CD4-positive, alpha-beta T cell (primary cell): ENCODE measurements at regions of chr18 and their contacts with region 1.

Region 1: DNA sequence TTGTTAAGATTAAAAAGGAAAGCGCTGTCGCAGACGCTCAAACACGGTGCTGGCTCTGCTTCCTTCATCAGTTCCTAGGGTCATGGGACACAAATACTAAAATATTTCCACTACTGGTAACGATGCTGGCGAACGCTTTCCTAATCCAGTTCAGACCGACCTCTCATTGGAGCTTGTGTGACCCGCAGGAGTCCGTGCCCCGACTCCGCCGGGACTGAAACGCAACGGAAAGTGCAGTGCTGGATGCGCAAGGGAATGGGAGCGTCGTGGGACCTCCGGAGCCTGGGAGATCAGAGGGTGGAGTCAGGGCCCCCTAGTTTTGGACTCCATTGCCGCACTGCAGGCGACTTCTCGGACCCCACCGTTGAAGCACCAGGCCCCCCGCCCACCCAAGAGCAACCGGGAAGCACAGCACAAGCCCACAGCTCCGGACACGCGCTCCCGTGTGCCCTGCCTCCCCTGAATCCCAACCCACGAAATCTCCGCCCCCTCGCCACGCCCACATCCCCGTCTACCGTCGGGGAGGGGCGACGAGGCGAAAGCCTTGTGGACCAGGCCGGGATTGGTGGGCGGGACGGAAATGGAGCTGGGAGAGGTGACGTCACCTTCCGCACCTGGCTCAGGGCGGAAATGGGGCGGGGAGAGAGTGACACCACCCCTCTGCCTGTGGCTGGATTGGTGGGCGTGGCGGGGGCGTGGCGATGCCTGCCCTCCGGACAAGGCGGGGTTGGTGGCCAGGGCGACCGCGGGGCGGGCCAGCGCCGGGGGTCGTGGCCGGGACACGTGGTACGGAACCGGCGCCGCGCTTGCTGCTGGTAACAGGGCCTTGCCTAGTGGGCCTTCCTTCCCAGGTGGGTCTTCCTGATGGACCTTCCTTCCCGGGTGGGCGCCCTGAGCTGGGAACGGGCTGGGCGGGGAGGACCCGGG is at the start of gene CNDP2:
- DNase-seq: peak; percentile 91 to 100 (median 98)
- ATAC-seq: peak; percentile 63
- H3K4me3 ChIP-seq: peak within 1 kb of the TSS; percentile 80
- H3K4me3 Mint-ChIP-seq: peak within 1 kb of the TSS; percentile 99
- H3K27ac ChIP-seq: peak within 1 kb of the TSS; percentile 78 to 86
- H3K27ac Mint-ChIP-seq: peak within 1 kb of the TSS; percentile 97
- H3K4me1 ChIP-seq: peaks cover 41% of the 10 kb centered on the region
- H3K4me1 Mint-ChIP-seq: peaks cover 61% of the 10 kb centered on the region
- H3K27me3 ChIP-seq: no peaks in the 10 kb centered on the region
- H3K27me3 Mint-ChIP-seq: no peaks in the 10 kb centered on the region
- CTCF ChIP-seq: no peak
- total RNA-seq, gene CNDP2: 75.5 to 75.7 TPM

Region 2: DNA sequence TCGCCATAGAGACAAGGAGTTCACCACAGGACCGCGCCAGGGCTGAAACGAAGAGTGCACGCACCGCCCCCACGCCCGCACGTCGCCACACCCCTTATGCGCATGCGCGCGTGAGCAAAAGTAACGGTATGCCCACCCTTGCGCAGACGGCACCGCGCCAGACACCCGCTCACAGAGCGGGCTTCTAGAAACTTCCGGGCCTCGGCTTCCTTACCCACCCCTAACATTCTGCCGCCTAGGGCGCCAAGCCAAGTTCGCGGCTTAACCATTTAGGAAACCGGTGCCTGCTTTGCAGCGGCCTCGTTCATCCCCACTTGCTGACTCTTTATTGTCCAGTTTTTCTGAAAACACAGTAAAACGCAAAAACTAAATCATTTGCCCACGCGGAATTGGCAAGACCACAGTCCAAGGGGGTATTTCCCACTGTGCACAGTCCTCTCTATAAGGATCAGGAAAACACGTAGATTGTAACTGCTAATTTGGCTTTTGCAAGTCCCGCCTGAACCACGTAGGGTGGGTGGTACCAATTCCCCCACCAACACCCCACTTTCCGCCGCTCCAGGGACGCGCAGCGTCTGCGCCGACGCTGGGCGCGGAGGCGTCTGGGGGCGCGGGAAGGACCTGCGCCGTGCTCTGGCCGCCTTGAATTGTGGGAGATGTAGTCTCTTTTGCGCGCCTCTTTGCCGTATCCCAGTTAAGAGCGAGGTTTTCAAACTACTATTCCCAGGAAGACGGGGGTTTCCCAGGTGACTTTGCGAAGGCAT is 347.9 kb before region 1 on chr18 and contains the starts of genes FBXO15 and TIMM21:
- CTCF ChIA-PET with region 1: no interaction called
- POLR2A ChIA-PET with region 1: no interaction called
- intact Hi-C with region 1: loop called in 1 of 2 experiments (anchors 2 kb)
- DNase-seq: peak; percentile 90 to 99 (median 96)
- ATAC-seq: peak; percentile 83
- H3K4me3 ChIP-seq: peak within 1 kb of the TSS; percentile 83
- H3K4me3 Mint-ChIP-seq: peak within 1 kb of the TSS; percentile 96
- H3K27ac ChIP-seq: peak within 1 kb of the TSS; percentile 95 to 99
- H3K27ac Mint-ChIP-seq: peak within 1 kb of the TSS; percentile 99
- H3K4me1 ChIP-seq: peaks cover 25% of the 10 kb centered on the region
- H3K4me1 Mint-ChIP-seq: peaks cover 58% of the 10 kb centered on the region
- H3K27me3 ChIP-seq: no peaks in the 10 kb centered on the region
- H3K27me3 Mint-ChIP-seq: no peaks in the 10 kb centered on the region
- CTCF ChIP-seq: no peak
- total RNA-seq, gene FBXO15: 0.58 to 1.0 TPM
- total RNA-seq, gene TIMM21: 10.7 to 11.8 TPM

Region 3: GRCh38 chr18:74342416-74343043 is 153.3 kb before region 1 on chr18:
- CTCF ChIA-PET with region 1: interaction called, 147 read pairs
- POLR2A ChIA-PET with region 1: interaction called, 4 read pairs
- intact Hi-C with region 1: no loop called
- DNase-seq: peak in 7 of 14 experiments; percentile 5 to 74 (median 50)
- ATAC-seq: no peak
- H3K4me3 ChIP-seq: no peak overlapping the region
- H3K4me3 Mint-ChIP-seq: no peak overlapping the region
- H3K27ac ChIP-seq: no peak overlapping the region
- H3K27ac Mint-ChIP-seq: no peak overlapping the region
- H3K4me1 ChIP-seq: no peaks in the 10 kb centered on the region
- H3K4me1 Mint-ChIP-seq: no peaks in the 10 kb centered on the region
- H3K27me3 ChIP-seq: peaks cover 0 to 6% of the 10 kb centered on the region in 2 experiments
- H3K27me3 Mint-ChIP-seq: peaks cover 10% of the 10 kb centered on the region
- CTCF ChIP-seq: peak; percentile 74

Region 4: GRCh38 chr18:74378179-74378682 is 117.6 kb before region 1 on chr18:
- CTCF ChIA-PET with region 1: interaction called, 18 read pairs
- POLR2A ChIA-PET with region 1: interaction called, 69 read pairs
- intact Hi-C with region 1: loop called in 1 of 2 experiments (anchors 1 kb)
- DNase-seq: peak in 4 of 14 experiments; percentile 15 to 72 (median 70)
- ATAC-seq: peak; percentile 38
- H3K4me3 ChIP-seq: no peak overlapping the region
- H3K4me3 Mint-ChIP-seq: peak overlapping the region; percentile 44
- H3K27ac ChIP-seq: peak overlapping the region; percentile 4 to 62
- H3K27ac Mint-ChIP-seq: peak overlapping the region; percentile 86
- H3K4me1 ChIP-seq: peaks cover 49% of the 10 kb centered on the region
- H3K4me1 Mint-ChIP-seq: peaks cover 62% of the 10 kb centered on the region
- H3K27me3 ChIP-seq: no peaks in the 10 kb centered on the region
- H3K27me3 Mint-ChIP-seq: no peaks in the 10 kb centered on the region
- CTCF ChIP-seq: no peak

Region 5: DNA sequence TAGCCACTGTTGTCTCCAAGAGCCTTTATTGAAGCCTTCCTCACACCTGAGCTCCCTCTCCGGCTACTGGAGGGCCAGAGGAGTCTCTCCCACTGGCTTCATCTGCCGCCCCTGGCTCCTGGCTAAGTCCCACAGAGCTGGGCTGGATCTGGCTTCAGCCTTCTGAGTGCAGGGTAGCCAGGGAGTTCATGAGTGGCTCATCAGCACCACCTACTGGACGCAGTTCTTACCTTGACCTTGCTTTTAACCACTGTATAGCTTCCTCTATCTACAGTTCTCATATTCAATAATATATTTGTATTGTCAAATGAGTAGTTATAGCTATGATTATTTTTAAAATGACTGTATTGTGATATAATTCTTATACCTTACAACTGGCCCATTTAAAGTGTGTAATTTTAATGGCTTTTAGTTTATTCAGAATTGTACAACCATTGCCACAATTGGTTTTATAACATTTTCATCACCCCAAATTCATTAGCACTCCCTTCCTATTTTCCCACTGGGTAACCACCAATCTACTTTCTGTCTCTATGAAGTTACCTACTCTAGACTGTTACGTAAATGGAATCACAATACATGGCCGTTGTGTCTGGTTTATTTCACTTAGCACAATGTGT is 56.2 kb after region 1 on chr18:
- CTCF ChIA-PET with region 1: interaction called, 6 read pairs
- POLR2A ChIA-PET with region 1: interaction called, 4 read pairs
- intact Hi-C with region 1: loop called (anchors 2 kb)
- DNase-seq: peak; percentile 61 to 89 (median 70)
- ATAC-seq: peak; percentile 94
- H3K4me3 ChIP-seq: no peak overlapping the region
- H3K4me3 Mint-ChIP-seq: no peak overlapping the region
- H3K27ac ChIP-seq: no peak overlapping the region
- H3K27ac Mint-ChIP-seq: no peak overlapping the region
- H3K4me1 ChIP-seq: no peaks in the 10 kb centered on the region
- H3K4me1 Mint-ChIP-seq: no peaks in the 10 kb centered on the region
- H3K27me3 ChIP-seq: no peaks in the 10 kb centered on the region
- H3K27me3 Mint-ChIP-seq: peaks cover 19% of the 10 kb centered on the region
- CTCF ChIP-seq: peak; percentile 85

Region 6: DNA sequence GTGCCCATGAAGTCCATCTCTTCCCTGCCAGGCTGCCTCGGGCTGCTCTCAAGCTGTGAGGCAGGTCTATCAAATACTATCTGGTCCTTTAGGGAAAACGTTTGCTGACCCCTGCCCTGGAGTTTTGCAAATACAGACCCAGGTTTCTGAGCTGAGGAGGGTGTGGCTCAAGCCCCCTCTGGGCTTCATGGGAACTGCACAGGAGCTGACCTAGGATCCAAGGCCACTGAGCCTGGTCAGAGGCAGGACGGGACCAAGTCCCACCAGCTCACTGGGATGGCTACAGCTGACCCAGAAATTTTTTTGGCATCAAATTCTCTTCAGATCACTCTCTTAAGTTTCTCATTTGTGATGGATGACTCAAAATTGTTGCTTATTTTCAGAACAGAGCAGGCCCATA is 1985.1 kb after region 1 on chr18:
- CTCF ChIA-PET with region 1: no interaction called
- POLR2A ChIA-PET with region 1: no interaction called
- intact Hi-C with region 1: loop called in 1 of 2 experiments (anchors 10 kb)
- DNase-seq: no peak
- ATAC-seq: no peak
- H3K4me3 ChIP-seq: no peak overlapping the region
- H3K4me3 Mint-ChIP-seq: no peak overlapping the region
- H3K27ac ChIP-seq: no peak overlapping the region
- H3K27ac Mint-ChIP-seq: no peak overlapping the region
- H3K4me1 ChIP-seq: no peaks in the 10 kb centered on the region
- H3K4me1 Mint-ChIP-seq: peaks cover 32% of the 10 kb centered on the region
- H3K27me3 ChIP-seq: no peaks in the 10 kb centered on the region
- H3K27me3 Mint-ChIP-seq: peaks cover 4% of the 10 kb centered on the region
- CTCF ChIP-seq: no peak